BJ (cell line): ENCODE measurements at regions of chr7 and their contacts with region 1.

Region 1: GRCh38 chr7:7595451-7595850 is 28.8 kb downstream of the MIOS start:
- DNase-seq: no peak
- H3K4me3 ChIP-seq: no peak overlapping the region
- H3K27me3 ChIP-seq: no peaks in the 10 kb centered on the region
- CTCF ChIP-seq: 0 out of 2 replicates have a peak, but pooled peaks have one; percentile 15

Region 2: DNA sequence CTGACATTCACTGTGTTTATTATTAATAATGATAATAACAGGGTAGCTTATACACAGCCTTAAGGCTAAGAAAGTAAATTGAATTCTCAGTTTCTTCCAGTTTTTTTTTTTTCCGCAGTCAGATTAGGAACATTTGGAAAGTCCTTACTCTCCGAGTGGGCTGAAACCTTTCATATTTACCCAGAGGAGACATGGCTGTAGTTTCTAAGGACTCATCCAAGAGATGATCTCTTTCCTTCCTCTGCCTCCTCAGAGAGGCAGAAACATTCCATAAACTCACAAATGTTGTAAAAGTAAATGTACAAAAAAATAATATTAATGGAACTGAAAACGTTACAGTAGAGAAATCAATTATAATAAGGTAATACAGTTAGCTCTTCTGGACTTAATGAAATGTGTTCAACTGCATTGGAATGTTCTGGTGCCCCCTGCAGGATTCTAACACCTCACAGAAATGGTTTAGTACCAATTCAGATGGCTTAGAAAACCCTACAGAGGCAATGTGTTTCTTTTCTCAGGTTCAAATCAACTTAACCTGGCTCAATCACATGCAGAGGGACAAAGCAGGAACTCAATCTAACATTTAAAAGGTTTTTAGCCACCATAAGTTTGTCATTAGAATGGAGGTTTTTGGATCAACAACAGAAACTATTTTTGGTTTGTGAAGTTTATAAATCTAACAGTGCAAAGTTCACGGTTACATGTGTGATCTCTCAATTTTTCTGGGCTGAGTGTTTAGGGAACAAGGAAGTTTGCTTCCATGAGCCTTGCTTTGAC is 594.9 kb after region 1 on chr7:
- CTCF ChIA-PET with region 1: interaction called, 19 read pairs
- POLR2A ChIA-PET with region 1: no interaction called
- DNase-seq: no peak
- H3K4me3 ChIP-seq: no peak overlapping the region
- H3K27me3 ChIP-seq: no peaks in the 10 kb centered on the region
- CTCF ChIP-seq: peak; percentile 69

Region 3: DNA sequence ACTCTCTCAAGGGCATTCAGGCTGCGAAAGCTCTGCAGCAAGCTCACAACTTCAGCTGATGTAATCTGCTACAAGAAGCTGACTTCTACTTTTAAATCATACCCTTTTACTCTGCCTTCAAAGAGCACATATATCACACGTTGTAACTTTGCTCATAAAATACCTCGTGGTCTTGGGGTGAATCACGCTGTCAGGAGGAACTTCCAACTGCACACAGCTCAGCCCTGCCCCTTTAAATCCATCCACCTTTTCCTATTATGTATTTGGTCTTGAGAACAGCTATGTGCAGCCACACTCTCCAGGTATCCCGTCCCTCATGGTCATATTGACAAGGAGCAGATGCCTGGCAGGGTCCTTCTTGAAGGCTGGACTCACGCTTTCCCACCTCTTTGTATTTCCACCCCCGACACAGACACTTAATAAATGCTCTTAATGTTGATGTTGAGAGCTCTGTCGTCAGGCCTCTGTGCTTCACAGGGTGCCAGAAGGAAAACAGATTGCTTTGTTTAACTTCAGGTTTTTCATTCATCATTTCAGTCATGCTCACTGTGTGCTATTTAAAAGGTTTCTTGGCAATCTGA is 618.9 kb after region 1 on chr7:
- CTCF ChIA-PET with region 1: interaction called, 12 read pairs
- POLR2A ChIA-PET with region 1: no interaction called
- DNase-seq: peak; percentile 66
- H3K4me3 ChIP-seq: no peak overlapping the region
- H3K27me3 ChIP-seq: no peaks in the 10 kb centered on the region
- CTCF ChIP-seq: no peak